CD4-positive, alpha-beta memory T cell (primary cell): ENCODE measurements at regions of chr6 and their contacts with region 1.

Region 1: DNA sequence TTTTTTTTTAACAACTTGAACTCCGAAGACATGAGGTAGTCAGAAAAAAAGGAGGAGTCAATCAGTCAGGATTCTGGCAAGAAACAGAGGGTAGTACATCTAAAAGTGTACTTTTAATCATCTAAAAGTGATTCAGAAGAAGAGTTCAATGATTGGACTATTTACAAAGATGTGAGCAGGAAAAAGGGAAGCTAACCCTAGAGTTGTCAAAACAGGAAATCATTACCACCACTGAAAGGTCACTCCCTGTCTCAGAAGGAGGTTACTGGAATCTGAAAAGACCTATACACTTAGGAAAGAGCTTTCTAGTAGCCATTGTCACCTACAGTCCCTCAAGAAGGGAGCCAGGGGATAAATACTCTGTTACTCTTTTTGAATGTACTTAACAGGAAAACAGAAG is 16.7 kb upstream of the LMBRD1 start:
- DNase-seq: no peak
- H3K4me3 ChIP-seq: no peak overlapping the region
- H3K4me3 Mint-ChIP-seq: peak overlapping the region in 7 of 8 donors; percentile 30 to 83 (median 59)
- H3K27ac ChIP-seq: peak overlapping the region; percentile 47
- H3K27ac Mint-ChIP-seq: peak overlapping the region; percentile 84 to 99 (median 90)
- H3K4me1 ChIP-seq: peaks cover 55% of the 10 kb centered on the region
- H3K4me1 Mint-ChIP-seq: peaks cover 40 to 68% (median 55%) of the 10 kb centered on the region in 4 donors
- H3K27me3 ChIP-seq: no peaks in the 10 kb centered on the region
- H3K27me3 Mint-ChIP-seq: no peaks in the 10 kb centered on the region

Region 2: DNA sequence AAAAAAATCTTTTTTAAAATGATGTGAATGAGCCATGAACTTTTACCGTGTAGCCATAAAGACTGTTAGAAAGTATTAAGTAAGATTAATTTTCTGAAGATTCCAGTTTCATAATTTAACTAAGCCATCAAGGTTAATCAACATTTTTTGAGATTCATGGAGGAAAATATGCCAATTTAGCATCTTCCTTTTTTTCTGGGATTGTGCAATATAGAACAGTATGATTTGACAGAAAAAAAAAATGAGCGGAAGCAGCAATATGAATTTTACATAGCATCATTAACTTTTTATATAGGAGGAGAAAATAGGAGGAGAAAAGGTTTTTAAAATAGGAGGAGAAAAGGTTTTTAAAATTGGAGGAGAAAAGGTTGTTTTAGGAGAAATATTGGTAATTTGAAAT is 872.2 kb before region 1 on chr6:
- CTCF ChIA-PET with region 1: no interaction called
- POLR2A ChIA-PET with region 1: no interaction called
- intact Hi-C with region 1: no loop called
- DNase-seq: no peak
- H3K4me3 ChIP-seq: no peak overlapping the region
- H3K4me3 Mint-ChIP-seq: no peak overlapping the region
- H3K27ac ChIP-seq: no peak overlapping the region
- H3K27ac Mint-ChIP-seq: no peak overlapping the region
- H3K4me1 ChIP-seq: no peaks in the 10 kb centered on the region
- H3K4me1 Mint-ChIP-seq: no peaks in the 10 kb centered on the region
- H3K27me3 ChIP-seq: no peaks in the 10 kb centered on the region
- H3K27me3 Mint-ChIP-seq: no peaks in the 10 kb centered on the region

Region 3: DNA sequence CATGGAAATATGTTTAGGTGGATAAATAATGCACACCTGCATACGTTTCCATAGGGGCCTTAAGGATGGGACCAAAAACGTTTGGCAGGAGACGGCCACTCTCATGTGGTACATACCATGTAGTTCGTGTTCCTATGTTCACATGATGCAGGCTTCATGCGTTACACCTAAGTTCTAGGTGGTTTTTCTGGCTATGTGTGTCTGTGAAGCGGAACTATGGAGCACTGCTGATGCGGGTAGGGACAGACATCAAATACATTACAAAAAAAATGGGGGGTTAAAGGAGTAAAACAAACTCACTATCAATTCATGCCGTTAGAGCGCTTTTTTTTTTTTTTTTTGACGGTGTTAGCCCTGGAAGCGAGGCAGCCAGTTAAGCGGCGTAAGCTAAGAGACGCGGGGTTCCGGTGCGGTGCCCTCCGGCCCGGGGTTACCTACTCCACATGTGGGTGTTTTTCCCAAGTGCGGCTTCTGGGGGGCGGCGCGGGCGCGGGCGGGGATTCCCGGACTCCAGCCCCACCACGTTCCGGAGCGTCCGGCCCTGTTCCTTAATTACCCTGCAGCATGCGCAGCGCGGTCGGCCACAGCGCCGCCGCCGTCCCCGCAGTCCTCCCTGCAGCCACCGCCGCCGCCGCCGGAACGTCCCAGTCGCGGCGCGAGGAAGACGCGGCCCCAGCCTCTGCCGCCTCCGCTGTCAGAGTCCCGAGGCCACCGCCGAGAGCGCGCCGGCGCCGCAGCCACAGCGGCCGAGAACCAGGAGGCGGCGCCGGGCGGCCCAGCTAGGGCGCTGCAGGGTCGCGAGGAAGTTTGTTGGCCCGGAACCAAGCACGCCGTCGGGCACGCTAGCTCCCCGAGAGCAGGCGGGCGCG is 53.5 kb after region 1 on chr6:
- CTCF ChIA-PET with region 1: interaction called, 3 read pairs
- POLR2A ChIA-PET with region 1: interaction called, 5 read pairs
- intact Hi-C with region 1: loop called (anchors 1 kb)
- DNase-seq: peak; percentile 54 to 62 (median 58)
- H3K4me3 ChIP-seq: peak overlapping the region; percentile 29 to 37
- H3K4me3 Mint-ChIP-seq: peak overlapping the region; percentile 83 to 97 (median 92)
- H3K27ac ChIP-seq: peak overlapping the region; percentile 24
- H3K27ac Mint-ChIP-seq: peak overlapping the region; percentile 43 to 90 (median 71)
- H3K4me1 ChIP-seq: peaks cover 14% of the 10 kb centered on the region
- H3K4me1 Mint-ChIP-seq: peaks cover 11 to 23% (median 18%) of the 10 kb centered on the region in 4 donors
- H3K27me3 ChIP-seq: peaks cover 9% of the 10 kb centered on the region
- H3K27me3 Mint-ChIP-seq: peaks cover 8 to 13% of the 10 kb centered on the region in 2 donors